Activated naive CD4-positive, alpha-beta T cell treated with anti-CD3 and anti-CD28 coated beads for 36 hours (primary cell): ENCODE measurements at regions of chr6 and their contacts with region 1.

Region 1: DNA sequence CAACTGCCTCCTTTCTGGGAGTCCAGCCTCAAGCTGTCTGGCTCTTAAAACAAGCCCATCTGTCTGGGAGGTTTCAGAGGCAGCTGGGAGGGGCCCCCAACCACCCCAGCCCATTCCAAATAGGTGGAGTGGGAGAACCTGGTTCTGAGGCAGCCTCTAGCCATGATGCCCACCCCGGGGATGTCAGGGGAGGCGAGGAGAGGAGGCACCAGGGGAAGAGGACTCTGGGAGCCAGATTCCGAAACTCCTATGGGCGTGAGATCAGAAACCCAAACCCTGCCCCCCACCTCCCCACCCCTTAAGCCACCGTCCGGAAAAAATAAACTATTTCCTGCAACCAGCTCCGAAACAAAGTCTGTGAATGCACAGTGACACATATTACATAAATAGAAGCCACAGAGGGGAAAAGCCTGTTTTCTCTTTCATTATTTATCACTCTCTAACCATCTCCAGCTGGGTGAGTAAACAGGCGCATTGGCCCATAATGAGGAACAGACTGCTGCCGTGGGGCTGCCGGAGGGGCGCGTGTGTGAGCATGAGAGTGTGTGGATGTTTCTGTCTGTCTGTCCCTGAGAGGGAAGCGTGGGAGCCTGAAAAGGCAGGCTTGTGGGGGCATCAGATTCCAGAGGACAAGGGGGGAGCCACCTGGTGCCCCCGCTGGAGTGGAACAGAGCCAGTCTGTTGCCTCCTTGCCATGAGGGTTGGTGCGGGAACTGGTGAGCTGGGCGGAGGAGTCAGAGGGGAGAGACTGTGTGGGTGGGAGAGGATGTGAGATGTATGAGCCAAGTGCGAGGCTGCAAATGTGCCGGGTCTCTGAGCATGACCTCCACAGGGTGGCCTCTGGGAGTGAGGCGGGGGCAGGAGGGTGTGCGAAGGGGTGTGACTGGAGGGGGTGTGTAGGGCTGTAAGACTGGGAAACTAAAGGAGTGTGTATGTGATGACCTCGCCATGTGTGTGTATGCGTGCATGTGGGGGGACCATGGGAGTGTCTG is 14.3 kb upstream of the FOXP4 start:
- DNase-seq: peak; percentile 87
- H3K4me3 Mint-ChIP-seq: peak overlapping the region; percentile 73
- H3K27ac Mint-ChIP-seq: peak overlapping the region; percentile 94
- H3K4me1 Mint-ChIP-seq: peaks cover 39% of the 10 kb centered on the region
- H3K27me3 Mint-ChIP-seq: peaks cover 10% of the 10 kb centered on the region

Region 2: GRCh38 chr6:41200296-41200900 is 331.5 kb before region 1 on chr6:
- CTCF ChIA-PET with region 1: no interaction called
- intact Hi-C with region 1: loop called (anchors 1 kb)
- DNase-seq: peak; percentile 87
- H3K4me3 Mint-ChIP-seq: peak overlapping the region; percentile 76
- H3K27ac Mint-ChIP-seq: peak overlapping the region; percentile 94
- H3K4me1 Mint-ChIP-seq: peaks cover 65% of the 10 kb centered on the region
- H3K27me3 Mint-ChIP-seq: no peaks in the 10 kb centered on the region

Region 3: GRCh38 chr6:41298785-41299502 is 232.9 kb before region 1 on chr6:
- CTCF ChIA-PET with region 1: no interaction called
- intact Hi-C with region 1: loop called (anchors 5 kb)
- DNase-seq: no peak
- H3K4me3 Mint-ChIP-seq: peak overlapping the region; percentile 66
- H3K27ac Mint-ChIP-seq: peak overlapping the region; percentile 91
- H3K4me1 Mint-ChIP-seq: peaks cover 76% of the 10 kb centered on the region
- H3K27me3 Mint-ChIP-seq: no peaks in the 10 kb centered on the region

Region 4: GRCh38 chr6:41442800-41443501 is 88.9 kb before region 1 on chr6:
- CTCF ChIA-PET with region 1: no interaction called
- intact Hi-C with region 1: loop called (anchors 1 kb)
- DNase-seq: peak; percentile 47
- H3K4me3 Mint-ChIP-seq: no peak overlapping the region
- H3K27ac Mint-ChIP-seq: no peak overlapping the region
- H3K4me1 Mint-ChIP-seq: peaks cover 40% of the 10 kb centered on the region
- H3K27me3 Mint-ChIP-seq: peaks cover 5% of the 10 kb centered on the region

Region 5: DNA sequence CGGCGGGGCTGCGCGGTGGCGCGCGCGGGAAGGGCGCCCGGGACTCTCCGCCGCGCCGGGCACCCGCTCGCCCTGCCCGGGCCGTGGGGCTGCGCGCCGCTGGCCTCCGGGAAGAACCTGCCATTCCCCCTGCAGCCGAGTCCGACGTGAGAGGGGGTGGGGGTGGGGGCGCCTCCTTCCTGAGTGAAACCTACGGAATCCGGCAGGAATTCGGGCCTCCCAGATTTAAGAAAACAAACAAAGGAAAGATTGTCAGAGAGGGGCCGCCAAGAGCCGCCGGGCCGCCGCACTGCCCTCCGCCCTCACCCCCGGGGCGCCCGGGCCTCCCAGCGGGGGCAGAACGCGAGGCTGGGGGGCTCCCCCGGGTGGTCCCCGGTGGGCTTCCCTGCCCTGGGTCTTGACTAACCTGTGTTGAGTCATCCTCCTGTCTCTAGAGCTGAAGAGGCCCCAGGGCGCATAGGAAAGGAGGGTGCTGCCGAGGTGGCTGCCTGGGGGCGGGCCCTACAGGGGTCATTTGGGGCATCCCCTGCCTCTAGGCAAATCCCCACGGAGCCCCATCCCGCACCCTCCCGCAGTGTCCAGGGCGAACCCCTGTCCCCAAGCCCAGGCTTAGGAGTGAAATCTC is 27.9 kb before region 1 on chr6:
- CTCF ChIA-PET with region 1: no interaction called
- intact Hi-C with region 1: loop called (anchors 1 kb)
- DNase-seq: peak; percentile 69
- H3K4me3 Mint-ChIP-seq: peak overlapping the region; percentile 66
- H3K27ac Mint-ChIP-seq: no peak overlapping the region
- H3K4me1 Mint-ChIP-seq: peaks cover 16% of the 10 kb centered on the region
- H3K27me3 Mint-ChIP-seq: peaks cover 47% of the 10 kb centered on the region

Region 6: GRCh38 chr6:41545703-41546474 is 14.0 kb after region 1 on chr6 and contains the start of gene FOXP4:
- CTCF ChIA-PET with region 1: no interaction called
- intact Hi-C with region 1: loop called (anchors 1 kb)
- DNase-seq: peak; percentile 89
- H3K4me3 Mint-ChIP-seq: peak within 1 kb of the TSS; percentile 83
- H3K27ac Mint-ChIP-seq: peak within 1 kb of the TSS; percentile 83
- H3K4me1 Mint-ChIP-seq: peaks cover 12% of the 10 kb centered on the region
- H3K27me3 Mint-ChIP-seq: no peaks in the 10 kb centered on the region
- total RNA-seq, gene FOXP4: 15.9 to 16.0 TPM

Region 7: DNA sequence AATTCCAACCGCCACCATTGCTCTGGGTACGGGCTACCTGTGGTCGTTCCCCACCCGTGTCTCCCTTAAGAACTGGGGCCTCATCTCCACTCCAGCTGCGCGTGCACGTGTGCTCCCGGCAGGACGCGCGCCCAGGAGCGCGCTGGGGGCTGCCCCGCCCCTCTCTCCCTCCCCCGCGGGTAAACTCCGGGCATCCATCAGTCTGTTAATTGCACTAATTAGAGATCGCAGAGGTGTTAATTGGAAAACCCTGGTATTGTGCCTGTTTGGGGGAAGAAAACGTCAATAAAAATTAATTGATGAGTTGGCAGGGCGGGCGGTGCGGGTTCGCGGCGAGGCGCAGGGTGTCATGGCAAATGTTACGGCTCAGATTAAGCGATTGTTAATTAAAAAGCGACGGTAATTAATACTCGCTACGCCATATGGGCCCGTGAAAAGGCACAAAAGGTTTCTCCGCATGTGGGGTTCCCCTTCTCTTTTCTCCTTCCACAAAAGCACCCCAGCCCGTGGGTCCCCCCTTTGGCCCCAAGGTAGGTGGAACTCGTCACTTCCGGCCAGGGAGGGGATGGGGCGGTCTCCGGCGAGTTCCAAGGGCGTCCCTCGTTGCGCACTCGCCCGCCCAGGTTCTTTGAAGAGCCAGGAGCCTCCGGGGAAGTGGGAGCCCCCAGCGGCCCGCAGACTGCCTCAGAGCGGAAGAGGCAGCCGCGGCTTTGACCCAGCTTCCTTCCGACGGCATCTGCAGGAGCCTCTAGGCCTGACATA is 28.7 kb after region 1 on chr6:
- CTCF ChIA-PET with region 1: no interaction called
- intact Hi-C with region 1: loop called (anchors 1 kb)
- DNase-seq: peak; percentile 94
- H3K4me3 Mint-ChIP-seq: peak overlapping the region; percentile 83
- H3K27ac Mint-ChIP-seq: peak overlapping the region; percentile 83
- H3K4me1 Mint-ChIP-seq: peaks cover 26% of the 10 kb centered on the region
- H3K27me3 Mint-ChIP-seq: no peaks in the 10 kb centered on the region